GM12878 (cell line): ENCODE measurements at regions of chr5 and their contacts with region 1.

Region 1: GRCh38 chr5:95846554-95847260 is 24.2 kb upstream of the GLRX start:
- DNase-seq: no peak
- ATAC-seq: peak; percentile 82
- H3K4me3 ChIP-seq: no peak overlapping the region
- H3K27ac ChIP-seq: no peak overlapping the region
- H3K4me1 ChIP-seq: peaks cover 12% of the 10 kb centered on the region
- H3K27me3 ChIP-seq: no peaks in the 10 kb centered on the region
- CTCF ChIP-seq: peak; percentile 88 to 97 (median 95); a peak in 5 of 6 replicates
- EP300 ChIP-seq: no peak
- POLR2A ChIP-seq: no peak
- RAD21 ChIP-seq: peak; percentile 98

Region 2: GRCh38 chr5:95646554-95647431 is 199.9 kb before region 1 on chr5 and contains the start of gene RFESD:
- CTCF ChIA-PET with region 1: interaction called, 206 read pairs
- POLR2A ChIA-PET with region 1: interaction called, 5 read pairs
- RAD21 ChIA-PET with region 1: interaction called, 98 read pairs
- SMC1A ChIA-PET with region 1: interaction called, 168 read pairs
- in situ Hi-C with region 1: no loop called
- intact Hi-C with region 1: loop called (anchors 1 kb)
- DNase-seq: peak; percentile 83
- ATAC-seq: peak; percentile 97
- H3K4me3 ChIP-seq: peak within 1 kb of the TSS; percentile 75
- H3K27ac ChIP-seq: peak within 1 kb of the TSS; percentile 80
- H3K4me1 ChIP-seq: peaks cover 5% of the 10 kb centered on the region
- H3K27me3 ChIP-seq: no peaks in the 10 kb centered on the region
- CTCF ChIP-seq: peak in 2 of 3 experiments; percentile 2 to 9; a peak in 1 of 6 replicates
- EP300 ChIP-seq: no peak
- POLR2A ChIP-seq: peak; percentile 88
- RAD21 ChIP-seq: 0 out of 2 replicates have a peak, but pooled peaks have one; percentile 1
- polyA plus RNA-seq, gene RFESD: 14.0 to 14.7 TPM

Region 3: DNA sequence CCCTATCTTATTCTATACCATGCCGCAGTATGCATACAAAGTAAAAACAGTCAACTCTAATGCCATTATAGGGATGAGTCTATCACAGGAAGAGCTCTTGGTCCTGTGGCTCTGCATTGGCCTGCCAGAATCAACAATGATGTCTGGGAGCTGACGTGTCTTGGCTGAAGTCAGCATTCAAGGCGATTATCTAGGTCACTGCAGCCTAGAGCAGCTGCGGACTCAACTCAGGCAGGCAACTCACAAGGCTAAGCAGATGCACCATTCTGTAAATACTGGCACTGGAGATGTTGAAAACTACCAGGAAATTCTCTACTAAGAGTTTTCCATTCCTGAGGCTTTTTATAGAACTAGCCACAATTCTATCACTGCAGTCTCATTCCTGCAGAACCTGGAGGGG is 177.2 kb before region 1 on chr5:
- CTCF ChIA-PET with region 1: interaction called, 81 read pairs
- POLR2A ChIA-PET with region 1: interaction called, 3 read pairs
- RAD21 ChIA-PET with region 1: interaction called, 49 read pairs
- SMC1A ChIA-PET with region 1: interaction called, 96 read pairs
- in situ Hi-C with region 1: loop called (anchors 5 kb)
- intact Hi-C with region 1: loop called (anchors 1 kb)
- DNase-seq: no peak
- ATAC-seq: no peak
- H3K4me3 ChIP-seq: no peak overlapping the region
- H3K27ac ChIP-seq: no peak overlapping the region
- H3K4me1 ChIP-seq: no peaks in the 10 kb centered on the region
- H3K27me3 ChIP-seq: no peaks in the 10 kb centered on the region
- CTCF ChIP-seq: no peak
- EP300 ChIP-seq: no peak
- POLR2A ChIP-seq: no peak
- RAD21 ChIP-seq: no peak

Region 4: GRCh38 chr5:95748133-95748532 is 98.6 kb before region 1 on chr5:
- CTCF ChIA-PET with region 1: no interaction called
- POLR2A ChIA-PET with region 1: no interaction called
- RAD21 ChIA-PET with region 1: no interaction called
- SMC1A ChIA-PET with region 1: no interaction called
- in situ Hi-C with region 1: no loop called
- intact Hi-C with region 1: no loop called
- DNase-seq: no peak
- ATAC-seq: no peak
- H3K4me3 ChIP-seq: no peak overlapping the region
- H3K27ac ChIP-seq: no peak overlapping the region
- H3K4me1 ChIP-seq: no peaks in the 10 kb centered on the region
- H3K27me3 ChIP-seq: no peaks in the 10 kb centered on the region
- CTCF ChIP-seq: no peak
- EP300 ChIP-seq: no peak
- POLR2A ChIP-seq: no peak
- RAD21 ChIP-seq: no peak

Region 5: DNA sequence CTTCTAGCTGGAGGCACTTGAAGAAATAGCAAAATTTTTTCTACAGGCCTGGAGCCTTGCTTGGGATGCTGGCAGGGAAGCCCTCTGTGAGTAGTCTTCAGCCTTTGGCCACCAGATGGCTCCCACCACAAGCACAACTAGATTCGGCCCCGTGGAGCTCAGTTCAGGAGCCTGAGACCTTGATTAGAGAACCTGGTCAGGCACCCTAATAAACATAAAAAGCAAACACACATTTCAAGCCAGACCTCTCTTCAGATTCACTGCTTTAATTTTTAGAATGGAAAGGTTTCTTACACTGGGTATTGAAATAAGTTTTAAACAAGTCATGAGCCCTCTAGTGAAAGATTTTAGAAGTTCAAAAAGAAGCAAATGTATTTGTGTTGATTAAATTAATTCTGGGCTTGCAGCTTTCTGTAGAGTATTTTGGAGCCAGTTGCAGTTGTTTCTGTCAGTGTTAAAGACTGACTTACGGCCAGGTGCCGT is 65.6 kb before region 1 on chr5:
- CTCF ChIA-PET with region 1: interaction called, 653 read pairs
- POLR2A ChIA-PET with region 1: interaction called, 8 read pairs
- RAD21 ChIA-PET with region 1: interaction called, 209 read pairs
- SMC1A ChIA-PET with region 1: interaction called, 622 read pairs
- in situ Hi-C with region 1: loop called (anchors 5 kb)
- intact Hi-C with region 1: loop called (anchors 1 kb)
- DNase-seq: peak; percentile 51
- ATAC-seq: peak; percentile 100
- H3K4me3 ChIP-seq: no peak overlapping the region
- H3K27ac ChIP-seq: no peak overlapping the region
- H3K4me1 ChIP-seq: no peaks in the 10 kb centered on the region
- H3K27me3 ChIP-seq: no peaks in the 10 kb centered on the region
- CTCF ChIP-seq: peak; percentile 84 to 86 (median 86)
- EP300 ChIP-seq: no peak
- POLR2A ChIP-seq: no peak
- RAD21 ChIP-seq: peak; percentile 95

Region 6: DNA sequence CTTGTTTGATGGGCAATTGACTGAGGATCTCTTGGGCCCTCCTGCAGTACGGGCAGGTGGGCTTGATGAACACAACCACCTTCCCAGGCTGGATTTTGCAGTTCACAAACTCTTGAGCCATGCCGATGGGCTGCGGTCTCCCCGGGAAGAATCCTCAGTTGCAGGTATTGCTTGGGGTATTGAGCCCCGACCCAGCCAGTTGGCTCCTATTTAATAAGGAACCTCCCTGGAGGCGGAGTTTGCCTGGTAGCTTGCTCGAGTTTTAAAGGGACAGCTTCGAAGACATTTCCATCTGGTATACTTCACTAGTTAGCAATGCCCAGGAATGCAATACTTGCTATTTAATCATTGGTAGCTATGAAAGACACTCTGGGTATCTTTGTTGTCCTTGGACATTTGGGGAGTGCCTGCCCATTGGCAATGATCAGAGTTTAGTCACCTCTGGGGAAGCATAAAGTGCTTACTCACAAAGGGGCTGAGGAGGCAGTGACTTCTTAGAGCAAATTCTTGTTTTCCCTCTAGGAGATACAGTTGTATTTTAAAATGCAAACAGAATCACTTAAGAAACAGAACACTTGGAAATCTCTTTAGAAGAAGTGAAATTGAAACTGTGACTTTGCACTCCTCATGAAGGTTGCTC is 24.0 kb before region 1 on chr5 and contains the start of gene GLRX:
- CTCF ChIA-PET with region 1: interaction called, 145 read pairs
- POLR2A ChIA-PET with region 1: interaction called, 5 read pairs
- RAD21 ChIA-PET with region 1: interaction called, 186 read pairs
- SMC1A ChIA-PET with region 1: interaction called, 320 read pairs
- in situ Hi-C with region 1: no loop called
- intact Hi-C with region 1: no loop called
- DNase-seq: no peak
- ATAC-seq: peak; percentile 66
- H3K4me3 ChIP-seq: peak within 1 kb of the TSS; percentile 87
- H3K27ac ChIP-seq: peak within 1 kb of the TSS; percentile 86
- H3K4me1 ChIP-seq: peaks cover 26% of the 10 kb centered on the region
- H3K27me3 ChIP-seq: no peaks in the 10 kb centered on the region
- CTCF ChIP-seq: no peak
- EP300 ChIP-seq: 0 out of 4 replicates have a peak, but pooled peaks of 1 of the 2 experiments have one; percentile 33
- POLR2A ChIP-seq: peak; percentile 69
- RAD21 ChIP-seq: no peak
- polyA plus RNA-seq, gene GLRX: 311 to 366 TPM

Region 7: GRCh38 chr5:95870105-95870672 is 23.5 kb after region 1 on chr5:
- CTCF ChIA-PET with region 1: interaction called, 5 read pairs
- POLR2A ChIA-PET with region 1: no interaction called
- RAD21 ChIA-PET with region 1: interaction called, 4 read pairs
- SMC1A ChIA-PET with region 1: interaction called, 10 read pairs
- in situ Hi-C with region 1: no loop called
- intact Hi-C with region 1: no loop called
- DNase-seq: peak; percentile 65
- ATAC-seq: peak; percentile 84
- H3K4me3 ChIP-seq: peak overlapping the region; percentile 54; the same call in 1 of the 2 replicates
- H3K27ac ChIP-seq: peak overlapping the region; percentile 82
- H3K4me1 ChIP-seq: peaks cover 24% of the 10 kb centered on the region
- H3K27me3 ChIP-seq: no peaks in the 10 kb centered on the region
- CTCF ChIP-seq: no peak
- EP300 ChIP-seq: no peak; a peak in 1 of 4 replicates
- POLR2A ChIP-seq: 0 out of 2 replicates have a peak, but pooled peaks have one; percentile 32
- RAD21 ChIP-seq: no peak

Region 8: GRCh38 chr5:95949810-95950209 is 103.1 kb after region 1 on chr5:
- CTCF ChIA-PET with region 1: no interaction called
- POLR2A ChIA-PET with region 1: no interaction called
- RAD21 ChIA-PET with region 1: no interaction called
- SMC1A ChIA-PET with region 1: no interaction called
- in situ Hi-C with region 1: no loop called
- intact Hi-C with region 1: no loop called
- DNase-seq: no peak
- ATAC-seq: peak; percentile 68
- H3K4me3 ChIP-seq: peak overlapping the region; percentile 15; the same call in 1 of the 2 replicates
- H3K27ac ChIP-seq: peak overlapping the region; percentile 67
- H3K4me1 ChIP-seq: peaks cover 18% of the 10 kb centered on the region; the same call in 1 of the 2 replicates
- H3K27me3 ChIP-seq: no peaks in the 10 kb centered on the region
- CTCF ChIP-seq: no peak
- EP300 ChIP-seq: no peak
- POLR2A ChIP-seq: no peak
- RAD21 ChIP-seq: no peak

Region 9: GRCh38 chr5:96001262-96001661 is 154.6 kb after region 1 on chr5:
- CTCF ChIA-PET with region 1: no interaction called
- POLR2A ChIA-PET with region 1: no interaction called
- RAD21 ChIA-PET with region 1: no interaction called
- SMC1A ChIA-PET with region 1: no interaction called
- in situ Hi-C with region 1: no loop called
- intact Hi-C with region 1: no loop called
- DNase-seq: no peak
- ATAC-seq: no peak
- H3K4me3 ChIP-seq: no peak overlapping the region
- H3K27ac ChIP-seq: no peak overlapping the region
- H3K4me1 ChIP-seq: no peaks in the 10 kb centered on the region
- H3K27me3 ChIP-seq: no peaks in the 10 kb centered on the region
- CTCF ChIP-seq: no peak
- EP300 ChIP-seq: no peak
- POLR2A ChIP-seq: no peak
- RAD21 ChIP-seq: no peak